ENCODE measurements at regions of chr10 and their contacts with region 1.

Region 1: GRCh38 chr10:110671788-110672579 is 27.8 kb downstream of the RBM20 start:
- DNase-seq: peak; percentile 76
- H3K4me3 Mint-ChIP-seq: peak overlapping the region; percentile 75
- H3K27ac Mint-ChIP-seq: peak overlapping the region; percentile 80
- H3K4me1 Mint-ChIP-seq: no peaks in the 10 kb centered on the region
- H3K27me3 Mint-ChIP-seq: no peaks in the 10 kb centered on the region
- CTCF ChIP-seq: peak; percentile 75

Region 2: GRCh38 chr10:110460111-110460809 is 211.7 kb before region 1 on chr10:
- CTCF ChIA-PET with region 1: no interaction called
- POLR2A ChIA-PET with region 1: no interaction called
- intact Hi-C with region 1: no loop called
- DNase-seq: peak; percentile 77
- H3K4me3 Mint-ChIP-seq: no peak overlapping the region
- H3K27ac Mint-ChIP-seq: no peak overlapping the region
- H3K4me1 Mint-ChIP-seq: peaks cover 31% of the 10 kb centered on the region
- H3K27me3 Mint-ChIP-seq: no peaks in the 10 kb centered on the region
- CTCF ChIP-seq: no peak

Region 3: GRCh38 chr10:110629680-110630191 is 42.2 kb before region 1 on chr10:
- CTCF ChIA-PET with region 1: interaction called, 10 read pairs
- POLR2A ChIA-PET with region 1: interaction called, 10 read pairs
- intact Hi-C with region 1: no loop called
- DNase-seq: peak; percentile 86
- H3K4me3 Mint-ChIP-seq: no peak overlapping the region
- H3K27ac Mint-ChIP-seq: no peak overlapping the region
- H3K4me1 Mint-ChIP-seq: peaks cover 31% of the 10 kb centered on the region
- H3K27me3 Mint-ChIP-seq: no peaks in the 10 kb centered on the region
- CTCF ChIP-seq: no peak

Region 4: DNA sequence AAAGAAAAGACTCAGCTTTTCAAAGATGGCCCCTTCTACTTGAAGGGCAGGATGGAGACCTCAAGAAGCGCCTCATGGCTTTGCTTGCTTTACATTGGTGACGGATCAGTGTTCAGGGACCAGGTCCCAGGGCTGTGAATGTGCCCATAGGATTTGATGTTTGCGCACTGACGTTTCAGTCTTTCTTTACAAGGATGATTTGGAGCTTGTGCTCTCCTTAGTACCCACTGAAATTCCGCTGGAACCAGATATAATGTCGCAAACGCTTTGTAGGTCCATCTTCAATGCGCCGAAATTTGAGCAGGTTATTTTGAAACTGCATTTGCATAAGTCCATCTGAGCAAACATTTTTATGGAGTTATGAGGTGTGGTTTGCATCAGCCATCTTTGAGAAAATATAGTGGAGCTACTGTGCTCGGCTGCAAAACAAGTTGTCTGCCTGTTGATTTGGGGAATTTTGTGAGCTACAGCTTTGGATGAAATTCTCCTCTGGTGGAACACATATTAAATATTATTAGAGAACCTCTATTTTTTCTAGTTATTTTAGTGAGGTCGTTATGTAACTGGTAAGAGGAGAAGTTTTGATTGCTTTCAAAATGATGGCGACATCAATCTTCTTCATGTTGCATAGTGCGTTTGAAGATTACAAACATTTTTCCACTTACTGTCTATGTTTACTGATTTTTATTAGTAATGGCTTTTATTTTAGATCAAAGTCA is 25.4 kb before region 1 on chr10:
- CTCF ChIA-PET with region 1: interaction called, 11 read pairs
- POLR2A ChIA-PET with region 1: interaction called, 3 read pairs
- intact Hi-C with region 1: no loop called
- DNase-seq: no peak
- H3K4me3 Mint-ChIP-seq: no peak overlapping the region
- H3K27ac Mint-ChIP-seq: no peak overlapping the region
- H3K4me1 Mint-ChIP-seq: peaks cover 5% of the 10 kb centered on the region
- H3K27me3 Mint-ChIP-seq: peaks cover 50% of the 10 kb centered on the region
- CTCF ChIP-seq: no peak

Region 5: DNA sequence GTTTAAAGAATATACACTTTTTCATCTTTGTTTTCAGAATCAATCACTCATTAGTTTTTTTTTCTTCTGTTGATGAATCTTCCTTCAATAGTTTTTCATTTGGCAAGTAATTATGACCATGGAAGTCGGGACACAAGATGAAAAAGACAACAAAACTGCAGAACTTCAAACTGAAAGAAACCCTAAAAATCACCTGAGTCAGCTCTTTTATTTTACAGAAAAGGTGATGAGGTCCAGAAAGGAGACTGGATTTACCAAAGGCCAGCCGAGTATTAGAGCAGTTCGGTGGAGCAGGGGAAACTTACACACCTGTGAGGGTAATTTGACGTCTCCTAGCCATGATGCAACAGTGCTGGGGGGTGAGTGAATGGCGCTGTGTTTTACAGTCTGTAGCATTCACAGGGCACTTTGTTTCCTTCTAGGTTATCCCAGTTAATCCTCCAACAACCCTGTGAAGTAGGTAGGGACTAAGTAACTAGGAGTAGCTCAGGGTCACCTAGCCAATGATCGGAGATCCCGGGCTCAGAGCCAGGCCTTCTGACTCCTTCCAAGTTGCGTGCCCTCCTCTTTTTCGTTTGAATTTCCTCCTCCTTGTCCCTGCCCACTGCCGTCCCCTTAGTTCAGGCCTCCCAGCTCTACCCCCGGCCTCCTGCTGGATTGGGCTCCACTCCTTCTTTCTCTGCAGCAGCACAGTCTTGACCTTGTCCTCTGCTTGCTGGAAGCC is 13.9 kb before region 1 on chr10:
- CTCF ChIA-PET with region 1: interaction called, 27 read pairs
- POLR2A ChIA-PET with region 1: interaction called, 5 read pairs
- intact Hi-C with region 1: no loop called
- DNase-seq: no peak
- H3K4me3 Mint-ChIP-seq: no peak overlapping the region
- H3K27ac Mint-ChIP-seq: no peak overlapping the region
- H3K4me1 Mint-ChIP-seq: no peaks in the 10 kb centered on the region
- H3K27me3 Mint-ChIP-seq: peaks cover 5% of the 10 kb centered on the region
- CTCF ChIP-seq: no peak